Transverse colon (tissue), 4 donors: ENCODE measurements at regions of chr6 and their contacts with region 1.

Region 1: DNA sequence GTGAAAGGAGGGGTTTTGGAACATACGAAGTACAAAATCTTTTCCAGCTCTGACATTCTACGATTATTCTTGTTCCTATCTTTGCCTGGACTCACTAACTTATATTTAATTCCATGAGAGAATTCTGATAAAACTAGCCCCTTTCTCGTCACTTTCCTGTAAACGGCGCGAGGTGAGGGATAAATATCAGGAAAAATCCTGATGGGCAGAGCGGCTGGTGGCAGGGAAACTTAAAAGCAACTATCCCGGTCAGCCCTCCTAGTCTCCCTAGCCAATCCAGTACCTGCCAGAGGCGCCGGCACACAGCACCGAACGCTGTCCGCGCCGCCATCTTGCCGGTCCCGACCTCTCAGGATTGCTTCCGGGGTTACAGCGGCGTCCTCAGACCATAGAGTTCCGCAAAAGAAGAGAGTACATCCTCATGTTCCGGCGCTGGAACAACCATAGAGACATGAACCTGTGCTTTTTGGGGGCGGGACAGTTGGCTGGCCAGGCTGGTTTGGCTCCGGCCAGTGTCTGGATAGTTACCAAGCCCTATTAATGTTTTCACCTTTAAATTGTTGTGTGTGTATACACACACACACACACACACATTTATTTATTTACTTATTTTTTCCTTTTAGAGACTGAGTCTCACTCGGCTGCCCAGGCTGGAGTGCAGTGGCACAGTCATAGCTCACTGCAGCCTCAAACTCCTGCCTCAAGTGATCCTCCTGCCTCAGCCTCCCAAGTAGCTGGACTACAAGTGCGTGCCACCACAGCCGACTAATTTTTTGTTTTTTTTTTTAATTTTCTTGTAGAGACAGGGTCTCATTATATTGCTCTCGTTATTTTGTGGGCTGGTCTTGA is at the start of gene MRPS10:
- DNase-seq: peak; percentile 93
- H3K4me3 ChIP-seq: peak within 1 kb of the TSS; percentile 32 to 93 (median 66)
- H3K27ac ChIP-seq: peak within 1 kb of the TSS; percentile 78 to 91 (median 85)
- H3K4me1 ChIP-seq: peaks cover 5 to 26% (median 9%) of the 10 kb centered on the region in 4 donors
- H3K27me3 ChIP-seq: no peaks in the 10 kb centered on the region
- CTCF ChIP-seq: no peak
- EP300 ChIP-seq: no peak
- POLR2A ChIP-seq: peak; percentile 83
- total RNA-seq, gene MRPS10: 23.6 to 75.4 (median 24.6) TPM

Region 2: GRCh38 chr6:41920921-41921711 is 296.6 kb before region 1 on chr6 and contains the starts of genes BYSL and MED20:
- in situ Hi-C with region 1: loop called in 2 of 4 experiments (anchors 25 kb)
- intact Hi-C with region 1: no loop called
- DNase-seq: peak; percentile 95
- H3K4me3 ChIP-seq: peak within 1 kb of the TSS; percentile 64 to 81 (median 74)
- H3K27ac ChIP-seq: peak within 1 kb of the TSS; percentile 95 to 98 (median 96)
- H3K4me1 ChIP-seq: peaks cover 18 to 36% (median 27%) of the 10 kb centered on the region in 4 donors
- H3K27me3 ChIP-seq: no peaks in the 10 kb centered on the region
- CTCF ChIP-seq: peak; percentile 96 to 99 (median 98)
- EP300 ChIP-seq: no peak
- POLR2A ChIP-seq: peak; percentile 93
- total RNA-seq, gene BYSL: 3.4 to 5.9 (median 5.2) TPM
- total RNA-seq, gene MED20: 15.4 to 25.7 (median 18.5) TPM

Region 3: GRCh38 chr6:41941280-41942066 is 276.3 kb before region 1 on chr6 and contains the start of gene CCND3:
- in situ Hi-C with region 1: loop called in 1 of 4 experiments (anchors 25 kb)
- intact Hi-C with region 1: no loop called
- DNase-seq: peak; percentile 93
- H3K4me3 ChIP-seq: peak within 1 kb of the TSS; percentile 75 to 84 (median 80)
- H3K27ac ChIP-seq: peak within 1 kb of the TSS; percentile 84 to 95 (median 94)
- H3K4me1 ChIP-seq: peaks cover 29 to 47% (median 41%) of the 10 kb centered on the region in 4 donors
- H3K27me3 ChIP-seq: no peaks in the 10 kb centered on the region
- CTCF ChIP-seq: no peak
- EP300 ChIP-seq: no peak
- POLR2A ChIP-seq: no peak
- total RNA-seq, gene CCND3: 55.3 to 178 (median 75.6) TPM

Region 4: GRCh38 chr6:42142118-42142931 is 75.4 kb before region 1 on chr6 and contains the start of gene C6orf132:
- in situ Hi-C with region 1: no loop called
- intact Hi-C with region 1: no loop called
- DNase-seq: peak; percentile 87
- H3K4me3 ChIP-seq: peak within 1 kb of the TSS; percentile 49 to 71 (median 56)
- H3K27ac ChIP-seq: peak within 1 kb of the TSS; percentile 83 to 92 (median 88)
- H3K4me1 ChIP-seq: peaks cover 6 to 56% (median 36%) of the 10 kb centered on the region in 4 donors
- H3K27me3 ChIP-seq: peaks cover 20% of the 10 kb centered on the region
- CTCF ChIP-seq: peak in 2 of 5 experiments; percentile 13 to 52
- EP300 ChIP-seq: no peak
- POLR2A ChIP-seq: peak; percentile 94
- total RNA-seq, gene C6orf132: 26.1 to 96.9 (median 43.2) TPM